ENCODE measurements at regions of chr6 and their contacts with region 1.

Region 1: DNA sequence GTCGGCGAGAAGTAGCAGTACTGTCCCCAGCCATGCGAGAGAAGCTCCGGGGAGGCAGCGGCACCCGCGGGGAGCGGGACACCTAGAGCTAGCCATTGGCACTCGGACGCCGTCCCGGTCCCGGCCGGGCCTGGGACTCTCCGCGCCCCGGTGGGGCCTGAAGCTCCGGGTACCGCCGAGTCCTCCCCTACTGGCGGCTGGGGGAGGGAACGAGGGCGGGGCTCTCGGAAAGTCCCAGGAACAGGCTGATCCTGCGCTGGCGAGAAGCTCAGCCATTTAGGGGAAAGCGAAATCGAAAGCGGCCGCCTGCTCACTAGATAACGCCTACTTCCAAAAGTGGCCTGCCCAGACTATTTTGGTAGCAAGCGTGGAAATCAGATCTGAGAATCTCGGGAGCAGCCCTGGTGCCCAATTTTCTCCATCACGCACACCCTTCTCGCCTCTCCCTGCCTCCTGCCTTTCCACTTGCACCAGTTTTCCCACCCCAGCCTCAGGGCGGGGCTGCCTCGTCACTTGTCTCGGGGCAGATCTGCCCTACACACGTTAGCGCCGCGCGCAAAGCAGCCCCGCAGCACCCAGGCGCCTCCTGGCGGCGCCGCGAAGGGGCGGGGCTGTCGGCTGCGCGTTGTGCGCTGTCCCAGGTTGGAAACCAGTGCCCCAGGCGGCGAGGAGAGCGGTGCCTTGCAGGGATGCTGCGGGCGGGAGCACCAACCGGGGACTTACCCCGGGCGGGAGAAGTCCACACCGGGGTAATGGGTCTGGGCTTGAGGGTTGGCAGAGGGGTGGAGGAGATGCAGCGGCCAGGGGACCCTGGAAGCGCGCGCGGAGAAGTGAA is at the starts of genes PSMB9 and TAP1:
- DNase-seq: peak; percentile 88
- ATAC-seq: peak; percentile 89
- H3K4me3 ChIP-seq: peak within 1 kb of the TSS; percentile 93 to 96 (median 95)
- H3K27ac ChIP-seq: peak within 1 kb of the TSS; percentile 62
- H3K4me1 ChIP-seq: peaks cover 26% of the 10 kb centered on the region
- H3K27me3 ChIP-seq: no peaks in the 10 kb centered on the region; a peak in 1 of 5 replicates
- CTCF ChIP-seq: peak; percentile 97
- EP300 ChIP-seq: peak in 1 of 2 experiments; percentile 2; a peak in 1 of 4 replicates
- POLR2A ChIP-seq: peak; percentile 61 to 80
- RAD21 ChIP-seq: peak; percentile 94
- total RNA-seq, gene PSMB9: 16.0 and 21.4 TPM in 2 replicates
- total RNA-seq, gene TAP1: 23.0 and 52.2 TPM in 2 replicates

Region 2: DNA sequence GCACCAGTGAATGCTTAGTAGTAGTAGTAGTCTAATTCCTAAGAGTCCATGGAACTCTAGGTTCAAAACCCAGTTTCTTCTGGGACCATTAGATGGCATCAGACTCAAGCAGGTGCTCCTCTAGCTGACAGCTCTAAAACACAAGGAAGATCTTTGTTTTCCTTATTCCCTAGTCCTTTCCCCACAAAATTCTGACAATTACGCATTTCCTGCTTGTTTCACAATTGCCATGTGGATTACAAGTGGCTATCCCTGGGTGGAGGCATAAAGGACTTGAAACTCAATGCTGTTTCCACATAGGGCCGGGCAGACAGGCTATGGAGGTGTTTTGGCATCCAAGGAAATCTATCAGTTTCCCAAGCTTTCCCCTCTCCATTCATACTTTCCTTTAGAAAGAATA is 27.8 kb before region 1 on chr6:
- CTCF ChIA-PET with region 1: interaction called, 4 read pairs
- POLR2A ChIA-PET with region 1: no interaction called
- in situ Hi-C with region 1: no loop called
- intact Hi-C with region 1: loop called (anchors 1 kb)
- DNase-seq: peak; percentile 55
- ATAC-seq: peak; percentile 87
- H3K4me3 ChIP-seq: no peak overlapping the region
- H3K27ac ChIP-seq: no peak overlapping the region
- H3K4me1 ChIP-seq: no peaks in the 10 kb centered on the region
- H3K27me3 ChIP-seq: no peaks in the 10 kb centered on the region
- CTCF ChIP-seq: peak; percentile 76
- EP300 ChIP-seq: no peak
- POLR2A ChIP-seq: no peak
- RAD21 ChIP-seq: peak; percentile 64

Region 3: GRCh38 chr6:32838114-32838958 is 15.4 kb before region 1 on chr6 and contains the start of gene TAP2:
- CTCF ChIA-PET with region 1: interaction called, 39 read pairs
- POLR2A ChIA-PET with region 1: interaction called, 56 read pairs
- in situ Hi-C with region 1: no loop called
- intact Hi-C with region 1: loop called (anchors 1 kb)
- DNase-seq: peak; percentile 89
- ATAC-seq: peak; percentile 97
- H3K4me3 ChIP-seq: peak within 1 kb of the TSS; percentile 82 to 87 (median 86)
- H3K27ac ChIP-seq: peak within 1 kb of the TSS; percentile 80
- H3K4me1 ChIP-seq: peaks cover 24% of the 10 kb centered on the region
- H3K27me3 ChIP-seq: no peaks in the 10 kb centered on the region
- CTCF ChIP-seq: peak; percentile 99
- EP300 ChIP-seq: no peak
- POLR2A ChIP-seq: peak; percentile 60 to 73
- RAD21 ChIP-seq: peak; percentile 99
- total RNA-seq, gene TAP2: 9.8 and 17.6 TPM in 2 replicates

Measured in HepG2 (cell line).